Tibial artery (tissue), 4 donors: ENCODE measurements at regions of chr16 and their contacts with region 1.

Region 1: DNA sequence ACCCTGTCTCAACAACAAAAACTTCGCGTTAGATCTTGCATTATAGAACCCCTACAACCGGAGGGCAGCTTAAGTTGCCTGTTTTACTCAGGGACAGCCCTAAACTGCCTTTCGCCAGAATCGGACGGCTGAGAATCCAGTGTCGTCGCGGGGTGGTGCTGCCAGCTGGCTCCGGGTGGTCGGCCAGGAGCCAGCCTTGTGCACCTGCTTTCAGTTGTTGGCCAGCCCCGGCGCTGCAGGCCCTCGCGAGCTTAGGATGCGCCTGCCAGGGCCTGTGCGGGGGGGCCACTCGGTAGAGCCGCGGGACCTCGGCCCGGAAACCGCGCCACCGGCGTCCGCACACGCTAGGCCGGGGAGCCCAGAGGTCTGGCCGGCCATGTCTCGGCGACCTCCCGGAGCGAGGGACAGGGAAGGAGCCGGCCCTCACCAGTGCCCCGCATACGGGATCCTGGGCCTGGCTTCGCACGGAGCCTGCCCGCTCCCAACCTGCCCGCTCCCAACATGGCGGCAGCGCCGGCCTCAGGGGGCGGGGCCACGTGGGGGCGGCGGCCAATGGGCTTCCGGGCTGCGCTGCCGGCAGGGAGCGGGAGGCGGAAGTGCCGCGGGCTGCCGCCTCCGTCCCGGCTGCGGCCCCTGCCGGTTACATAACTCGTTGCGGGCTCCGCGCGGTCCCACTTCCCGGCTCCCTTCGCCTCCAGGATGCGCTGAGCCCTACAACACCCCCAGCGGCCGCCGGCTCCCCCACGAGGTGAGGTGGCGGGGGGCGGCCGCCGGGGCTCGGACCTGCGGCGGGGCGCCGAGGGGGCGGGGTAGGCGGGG is 14.2 kb downstream of the NAA60 start:
- DNase-seq: peak; percentile 76 to 92
- H3K4me3 ChIP-seq: peak overlapping the region; percentile 80 to 93
- H3K27ac ChIP-seq: peak overlapping the region; percentile 91 to 97
- H3K4me1 ChIP-seq: peaks cover 0 to 47% (median 34%) of the 10 kb centered on the region in 4 donors
- H3K27me3 ChIP-seq: no peaks in the 10 kb centered on the region
- CTCF ChIP-seq: peak; percentile 54 to 55

Region 2: GRCh38 chr16:3234543-3235541 is 222.8 kb before region 1 on chr16 and contains the start of gene ZNF200:
- intact Hi-C with region 1: loop called (anchors 10 kb)
- DNase-seq: peak; percentile 95 to 97
- H3K4me3 ChIP-seq: peak within 1 kb of the TSS; percentile 71 to 94
- H3K27ac ChIP-seq: peak within 1 kb of the TSS; percentile 85 to 94
- H3K4me1 ChIP-seq: peaks cover 0 to 17% (median 13%) of the 10 kb centered on the region in 4 donors
- H3K27me3 ChIP-seq: no peaks in the 10 kb centered on the region
- CTCF ChIP-seq: no peak

Region 3: DNA sequence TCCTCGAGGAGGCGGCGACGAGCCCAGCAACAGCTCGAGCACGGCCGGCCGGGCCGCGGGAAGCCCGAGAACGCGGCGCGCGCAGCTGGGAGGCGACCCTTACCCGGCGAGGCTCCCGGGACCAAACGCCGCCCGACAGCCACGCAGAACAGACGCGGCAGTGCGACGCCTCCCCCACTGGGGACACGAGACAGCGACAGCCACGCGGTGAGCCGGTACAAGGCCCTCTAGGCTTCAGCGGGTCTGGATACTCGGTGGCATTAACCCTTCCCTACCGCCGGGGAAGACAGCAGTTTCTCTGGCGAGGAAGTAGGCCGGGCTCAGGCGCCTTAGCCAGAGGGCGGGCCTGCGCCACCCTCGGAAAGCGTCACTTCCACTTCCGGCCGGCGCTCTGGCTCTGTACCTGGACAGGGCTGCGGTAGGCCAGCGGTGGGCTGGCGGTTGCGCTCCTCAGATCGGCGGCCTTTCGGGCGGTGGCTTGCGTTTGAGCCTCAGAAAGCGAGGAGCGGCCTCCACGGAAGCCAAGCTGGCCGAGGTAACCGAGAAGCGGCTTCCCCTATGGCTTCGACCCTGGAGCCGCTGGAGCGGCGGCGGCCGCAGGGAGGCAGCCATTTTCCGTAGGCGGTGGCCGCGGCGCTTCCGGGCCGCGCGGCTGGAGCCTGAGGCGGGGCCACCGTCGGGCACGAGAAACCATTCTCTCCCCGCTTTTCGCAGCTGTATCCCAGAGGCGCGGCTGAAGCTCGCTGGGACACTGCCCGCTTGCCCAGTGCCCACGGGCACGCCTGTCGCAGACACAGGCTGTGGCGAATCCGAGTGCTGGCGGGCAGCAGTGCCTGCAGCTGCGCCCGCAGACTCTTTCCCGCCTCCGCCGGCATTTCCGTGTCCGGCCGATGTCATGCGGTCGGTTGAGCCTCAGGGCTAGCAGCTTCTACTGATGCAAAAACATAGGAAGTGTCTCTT is 152.3 kb before region 1 on chr16 and contains the starts of genes TIGD7 and ZNF75A:
- intact Hi-C with region 1: loop called (anchors 5 kb)
- DNase-seq: peak; percentile 72 to 87
- H3K4me3 ChIP-seq: peak within 1 kb of the TSS; percentile 70 to 79
- H3K27ac ChIP-seq: peak within 1 kb of the TSS; percentile 87 to 88
- H3K4me1 ChIP-seq: peaks cover 0 to 23% (median 11%) of the 10 kb centered on the region in 4 donors
- H3K27me3 ChIP-seq: no peaks in the 10 kb centered on the region
- CTCF ChIP-seq: peak; percentile 19 to 21

Region 4: DNA sequence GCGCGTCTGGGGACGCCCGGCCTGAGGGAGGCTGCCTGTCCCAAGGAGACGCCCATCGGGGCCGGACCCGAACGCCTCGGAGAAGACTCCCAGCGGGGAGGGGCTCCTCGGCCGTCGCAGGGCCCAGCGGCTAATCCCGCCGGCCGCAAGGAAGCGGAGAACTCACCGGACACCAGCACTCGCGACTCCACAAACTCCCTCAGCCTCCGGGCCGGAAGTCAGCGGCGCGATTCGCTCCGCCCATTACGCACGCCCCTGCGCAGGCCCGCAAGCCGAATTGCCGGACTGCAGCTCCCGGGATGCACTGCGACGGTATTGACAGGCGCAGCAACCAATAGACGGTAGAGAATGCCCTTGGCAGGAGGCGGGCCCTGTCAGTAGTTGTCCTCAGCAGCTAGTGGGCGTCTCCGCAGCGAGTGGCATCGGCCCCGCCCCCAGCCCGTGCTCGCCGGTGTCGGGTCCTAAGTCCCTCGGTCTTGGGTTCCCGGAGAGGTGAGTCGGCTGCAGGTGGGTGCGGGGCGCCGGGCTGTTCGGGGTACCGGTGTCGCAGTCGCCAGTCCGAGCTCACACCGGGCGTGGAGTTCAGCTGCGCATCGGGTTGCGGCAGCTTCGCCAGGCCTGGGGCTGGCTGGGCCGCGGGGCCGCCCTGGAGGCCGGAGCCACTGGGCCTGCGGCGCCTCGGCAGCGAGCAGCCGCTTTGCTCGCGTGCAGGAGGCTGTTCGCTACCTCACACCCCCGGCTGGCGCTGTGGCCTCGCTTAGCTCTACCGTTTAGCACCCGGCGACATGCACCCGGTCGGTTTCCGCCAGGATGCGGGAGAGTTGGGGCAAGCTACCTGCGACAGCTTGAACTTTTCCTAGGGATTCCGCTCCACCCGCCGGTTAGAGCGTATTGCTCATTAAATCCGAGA is 56.6 kb before region 1 on chr16 and contains the starts of genes ZNF174 and ZSCAN32:
- intact Hi-C with region 1: loop called (anchors 1 kb)
- DNase-seq: peak; percentile 99 to 100
- H3K4me3 ChIP-seq: peak within 1 kb of the TSS; percentile 90 to 96
- H3K27ac ChIP-seq: peak within 1 kb of the TSS; percentile 90 to 92
- H3K4me1 ChIP-seq: peaks cover 0 to 35% (median 24%) of the 10 kb centered on the region in 4 donors
- H3K27me3 ChIP-seq: no peaks in the 10 kb centered on the region
- CTCF ChIP-seq: no peak

Region 5: DNA sequence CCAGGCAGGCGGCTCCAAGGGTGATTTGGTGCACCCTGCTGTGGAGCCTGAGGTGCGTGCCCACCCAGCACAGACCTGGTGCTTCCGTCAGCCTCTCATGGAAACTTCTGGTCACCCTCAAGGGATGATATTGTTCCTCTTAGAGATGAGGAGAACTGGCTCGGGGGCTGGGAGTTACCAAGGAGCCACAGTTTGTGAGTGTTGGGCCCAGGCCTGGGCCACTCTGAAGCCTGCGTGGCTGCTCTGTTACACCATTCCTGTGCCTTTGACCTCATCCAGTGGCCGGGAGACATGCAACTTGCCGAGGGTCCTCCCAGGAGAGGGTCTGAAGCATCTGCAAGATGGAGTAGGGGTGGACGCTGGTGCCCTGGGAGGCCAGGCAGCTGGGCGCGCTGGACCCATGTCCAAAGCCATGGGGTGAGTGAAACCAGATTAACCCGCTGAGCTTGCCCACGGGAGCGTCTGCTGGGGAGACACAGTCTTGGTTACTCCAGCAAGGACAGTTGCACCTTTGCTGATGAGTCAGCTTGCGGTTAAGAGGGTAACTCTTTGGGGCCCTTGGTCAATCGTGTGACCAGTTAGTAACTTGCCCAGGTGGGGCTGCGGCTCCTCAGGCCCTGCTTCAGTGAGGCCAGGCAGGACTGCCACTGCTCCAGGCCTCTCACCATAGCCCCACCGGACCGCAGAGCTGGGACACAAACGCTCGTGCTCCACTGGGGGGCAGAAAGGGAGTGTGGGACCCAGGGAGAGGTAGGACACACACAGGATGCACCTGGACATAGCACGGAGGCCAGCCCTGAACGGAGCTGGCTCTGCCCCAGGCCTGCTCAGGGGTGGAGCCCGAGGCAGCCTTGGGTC is 30.1 kb after region 1 on chr16:
- intact Hi-C with region 1: no loop called
- DNase-seq: no peak
- H3K4me3 ChIP-seq: no peak overlapping the region
- H3K27ac ChIP-seq: no peak overlapping the region
- H3K4me1 ChIP-seq: no peaks in the 10 kb centered on the region
- H3K27me3 ChIP-seq: no peaks in the 10 kb centered on the region
- CTCF ChIP-seq: no peak